Endothelial cell of umbilical vein (primary cell): ENCODE measurements at regions of chr1 and their contacts with region 1.

Region 1: DNA sequence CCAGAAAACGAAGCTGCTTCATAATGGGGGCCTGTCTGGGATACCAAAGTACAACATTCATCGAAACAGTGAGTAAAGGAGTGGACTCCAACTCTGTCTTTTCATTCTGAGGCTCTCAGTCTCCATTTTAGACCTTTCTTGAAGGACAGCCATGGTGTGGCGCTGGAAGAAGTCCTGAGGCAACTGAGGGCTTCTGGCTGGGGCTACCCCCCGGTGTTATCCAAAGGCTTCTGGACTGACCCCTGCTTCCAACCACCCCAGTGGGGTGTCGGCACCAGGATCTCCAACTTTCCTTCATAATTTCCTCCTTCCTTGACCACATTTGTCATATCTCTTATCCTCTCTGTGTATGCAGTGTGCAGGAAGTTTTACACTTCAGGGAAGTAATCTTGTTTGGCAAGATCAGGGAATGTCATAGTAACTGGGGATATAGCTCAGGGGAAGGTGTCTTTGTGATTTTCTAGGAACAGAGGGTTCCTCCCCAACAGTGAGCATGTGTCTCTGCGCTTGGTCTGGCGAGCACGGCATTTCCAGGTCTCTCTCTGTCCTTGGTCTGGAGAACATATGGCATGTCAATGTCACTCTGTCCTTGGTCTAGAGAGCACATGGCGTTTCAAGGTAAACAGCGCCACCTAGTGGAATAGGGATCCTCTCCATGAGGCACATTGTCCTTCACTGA is 19.4 kb upstream of the BSDC1 start:
- DNase-seq: peak; percentile 63
- H3K4me3 ChIP-seq: no peak overlapping the region
- H3K27ac ChIP-seq: no peak overlapping the region
- H3K4me1 ChIP-seq: no peaks in the 10 kb centered on the region
- H3K27me3 ChIP-seq: peaks cover 9 to 10% of the 10 kb centered on the region in 2 experiments
- CTCF ChIP-seq: peak; percentile 72 to 83
- POLR2A ChIP-seq: no peak

Region 2: GRCh38 chr1:32327204-32327603 is 86.4 kb before region 1 on chr1:
- CTCF ChIA-PET with region 1: no interaction called
- POLR2A ChIA-PET with region 1: no interaction called
- dilution Hi-C with region 1: no loop called
- intact Hi-C with region 1: no loop called
- DNase-seq: no peak
- H3K4me3 ChIP-seq: no peak overlapping the region
- H3K27ac ChIP-seq: no peak overlapping the region
- H3K4me1 ChIP-seq: no peaks in the 10 kb centered on the region
- H3K27me3 ChIP-seq: no peaks in the 10 kb centered on the region
- CTCF ChIP-seq: no peak
- POLR2A ChIP-seq: no peak

Region 3: GRCh38 chr1:32426489-32427255 is 13.0 kb after region 1 on chr1:
- CTCF ChIA-PET with region 1: interaction called, 31 read pairs
- POLR2A ChIA-PET with region 1: no interaction called
- dilution Hi-C with region 1: no loop called
- intact Hi-C with region 1: no loop called
- DNase-seq: no peak
- H3K4me3 ChIP-seq: no peak overlapping the region
- H3K27ac ChIP-seq: no peak overlapping the region
- H3K4me1 ChIP-seq: no peaks in the 10 kb centered on the region
- H3K27me3 ChIP-seq: peaks cover 48 to 50% of the 10 kb centered on the region in 2 experiments
- CTCF ChIP-seq: no peak
- POLR2A ChIP-seq: no peak